ENCODE measurements at regions of chr1 and their contacts with region 1.

Region 1: DNA sequence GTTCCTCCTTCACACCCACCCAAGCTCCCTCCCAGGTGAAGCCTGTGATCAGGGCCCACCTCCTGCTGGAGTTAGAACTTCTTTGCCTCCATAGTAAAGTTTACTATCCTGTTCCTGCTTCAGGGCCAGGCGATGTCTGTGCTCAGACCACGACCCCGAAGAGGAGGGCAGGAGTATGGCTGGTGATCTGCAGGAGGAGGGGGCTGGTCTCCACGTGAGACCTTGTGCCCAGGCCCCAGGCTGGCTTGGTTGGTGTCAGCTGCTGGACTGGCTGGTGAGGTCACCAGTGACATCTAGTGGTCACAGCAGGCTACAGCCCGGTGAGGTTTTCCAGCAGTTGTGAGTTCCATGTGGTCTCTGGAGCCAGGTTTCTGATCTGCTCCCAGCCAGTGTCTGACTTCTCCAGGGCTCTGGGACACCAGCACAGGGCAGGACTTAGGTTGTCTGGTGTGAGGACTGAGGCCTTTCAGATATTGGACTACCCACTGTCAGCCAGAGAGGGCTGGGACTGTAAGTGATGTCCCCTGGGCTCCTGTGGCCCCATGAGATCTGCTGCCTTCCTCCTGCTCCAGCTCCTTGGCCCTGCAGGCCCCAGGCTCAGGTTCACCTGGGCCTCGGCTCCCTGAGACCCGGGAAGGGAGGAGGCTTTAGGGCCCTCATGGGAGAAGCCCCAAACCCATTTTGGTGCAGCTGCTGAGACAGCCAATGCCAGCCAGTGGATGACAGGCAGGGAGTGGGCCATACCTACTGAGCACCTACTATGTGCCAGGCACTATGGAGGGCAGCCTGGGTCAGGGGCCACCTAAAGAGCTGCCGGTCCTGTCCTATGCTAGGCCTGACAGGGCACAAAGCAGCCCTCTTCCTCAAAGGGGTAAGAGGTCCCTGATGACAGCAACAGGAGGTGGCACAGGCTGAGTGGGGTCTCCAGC is 6.0 kb upstream of the UBL4B start:
- DNase-seq: peak; percentile 35
- ATAC-seq: peak; percentile 99
- H3K4me3 ChIP-seq: no peak overlapping the region
- H3K27ac ChIP-seq: no peak overlapping the region
- H3K4me1 ChIP-seq: peaks cover 0 to 4% of the 10 kb centered on the region in 2 experiments; a peak in 1 of 4 replicates
- H3K27me3 ChIP-seq: peaks cover 3% of the 10 kb centered on the region; the same call in 1 of the 2 replicates
- CTCF ChIP-seq: peak; percentile 65 to 95 (median 94)
- POLR2A ChIP-seq: no peak
- RAD21 ChIP-seq: peak; percentile 86

Region 2: GRCh38 chr1:109910123-109910962 is 195.9 kb before region 1 on chr1 and contains the start of gene CSF1:
- CTCF ChIA-PET with region 1: no interaction called
- POLR2A ChIA-PET with region 1: no interaction called
- RAD21 ChIA-PET with region 1: no interaction called
- intact Hi-C with region 1: no loop called
- DNase-seq: no peak
- ATAC-seq: peak; percentile 71
- H3K4me3 ChIP-seq: peak within 1 kb of the TSS; percentile 66 to 69
- H3K27ac ChIP-seq: peak within 1 kb of the TSS; percentile 55; the same call in 1 of the 2 replicates
- H3K4me1 ChIP-seq: peaks cover 0 to 15% of the 10 kb centered on the region in 2 experiments; a peak in 2 of 4 replicates
- H3K27me3 ChIP-seq: no peaks in the 10 kb centered on the region
- CTCF ChIP-seq: no peak
- POLR2A ChIP-seq: no peak
- RAD21 ChIP-seq: no peak
- total RNA-seq, gene CSF1: 3.0 TPM

Region 3: DNA sequence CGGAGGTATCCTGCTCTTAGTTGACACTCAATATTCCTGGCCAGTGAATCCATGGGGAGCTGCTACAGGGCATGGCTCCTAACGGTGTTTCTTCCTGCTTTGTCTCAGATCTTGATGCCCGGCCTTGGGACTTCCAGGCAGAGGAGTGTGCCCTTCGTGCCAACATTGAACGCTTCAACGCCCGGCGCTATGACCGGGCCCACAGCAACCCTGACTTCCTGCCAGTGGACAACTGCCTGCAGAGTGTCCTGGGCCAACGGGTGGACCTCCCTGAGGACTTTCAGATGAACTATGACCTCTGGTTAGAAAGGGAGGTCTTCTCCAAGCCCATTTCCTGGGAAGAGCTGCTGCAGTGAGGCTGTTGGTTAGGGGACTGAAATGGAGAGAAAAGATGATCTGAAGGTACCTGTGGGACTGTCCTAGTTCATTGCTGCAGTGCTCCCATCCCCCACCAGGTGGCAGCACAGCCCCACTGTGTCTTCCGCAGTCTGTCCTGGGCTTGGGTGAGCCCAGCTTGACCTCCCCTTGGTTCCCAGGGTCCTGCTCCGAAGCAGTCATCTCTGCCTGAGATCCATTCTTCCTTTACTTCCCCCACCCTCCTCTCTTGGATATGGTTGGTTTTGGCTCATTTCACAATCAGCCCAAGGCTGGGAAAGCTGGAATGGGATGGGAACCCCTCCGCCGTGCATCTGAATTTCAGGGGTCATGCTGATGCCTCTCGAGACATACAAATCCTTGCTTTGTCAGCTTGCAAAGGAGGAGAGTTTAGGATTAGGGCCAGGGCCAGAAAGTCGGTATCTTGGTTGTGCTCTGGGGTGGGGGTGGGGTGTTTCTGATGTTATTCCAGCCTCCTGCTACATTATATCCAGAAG is 52.5 kb before region 1 on chr1:
- CTCF ChIA-PET with region 1: interaction called, 8 read pairs
- POLR2A ChIA-PET with region 1: no interaction called
- RAD21 ChIA-PET with region 1: no interaction called
- intact Hi-C with region 1: loop called (anchors 1 kb)
- DNase-seq: no peak
- ATAC-seq: peak; percentile 93
- H3K4me3 ChIP-seq: no peak overlapping the region
- H3K27ac ChIP-seq: no peak overlapping the region
- H3K4me1 ChIP-seq: no peaks in the 10 kb centered on the region
- H3K27me3 ChIP-seq: no peaks in the 10 kb centered on the region
- CTCF ChIP-seq: peak; percentile 63 to 99 (median 97)
- POLR2A ChIP-seq: no peak
- RAD21 ChIP-seq: peak; percentile 69

Region 4: GRCh38 chr1:110118636-110119615 is 12.6 kb after region 1 on chr1:
- CTCF ChIA-PET with region 1: interaction called, 14 read pairs
- POLR2A ChIA-PET with region 1: no interaction called
- RAD21 ChIA-PET with region 1: no interaction called
- intact Hi-C with region 1: no loop called
- DNase-seq: no peak
- ATAC-seq: peak; percentile 52; the same call in 1 of the 2 replicates
- H3K4me3 ChIP-seq: no peak overlapping the region
- H3K27ac ChIP-seq: no peak overlapping the region
- H3K4me1 ChIP-seq: peaks cover 0 to 11% of the 10 kb centered on the region in 2 experiments; a peak in 2 of 4 replicates
- H3K27me3 ChIP-seq: peaks cover 2% of the 10 kb centered on the region; the same call in 1 of the 2 replicates
- CTCF ChIP-seq: no peak
- POLR2A ChIP-seq: no peak
- RAD21 ChIP-seq: no peak

Measured in HCT116 (cell line).